Activated T-helper 1 cell treated with anti-CD3 and anti-CD28 coated beads, Interleukin-12 subunit alpha, Interleukin-12 subunit beta, Interleukin-2, Interleukin-4 antibody, amounts not matched to agents 30 ng/mL and 10 ng/mL and 1 ng/mL, durations not matched to agents 14 hours and 24 hours and 36 hours (primary cell): ENCODE measurements at regions of chr20 and their contacts with region 1.

Region 1: DNA sequence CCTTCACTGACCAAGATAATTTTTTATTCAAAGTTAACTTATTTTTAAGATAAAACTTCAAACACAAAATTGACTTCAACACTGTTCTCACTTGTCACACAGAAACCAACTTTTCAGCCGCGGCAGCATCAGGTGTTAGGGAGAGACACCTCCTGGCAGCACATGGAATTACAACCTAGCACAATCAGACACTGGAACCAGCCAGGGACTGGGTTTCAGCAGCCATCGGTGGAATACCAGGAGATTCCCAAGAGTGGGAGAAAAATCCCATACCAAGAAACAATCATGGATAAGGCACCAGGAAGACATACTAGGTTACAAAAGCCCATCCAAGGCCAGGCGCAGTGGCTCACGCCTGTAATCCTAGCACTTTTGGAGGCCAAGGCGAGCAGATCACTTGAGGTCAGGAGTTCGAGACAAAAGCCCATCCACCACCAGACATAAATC is 70.0 kb downstream of the SNX5 start:
- DNase-seq: peak; percentile 44
- H3K4me3 Mint-ChIP-seq: no peak overlapping the region
- H3K27ac Mint-ChIP-seq: no peak overlapping the region
- H3K4me1 Mint-ChIP-seq: peaks cover 37% of the 10 kb centered on the region
- H3K27me3 Mint-ChIP-seq: peaks cover 17% of the 10 kb centered on the region

Region 2: DNA sequence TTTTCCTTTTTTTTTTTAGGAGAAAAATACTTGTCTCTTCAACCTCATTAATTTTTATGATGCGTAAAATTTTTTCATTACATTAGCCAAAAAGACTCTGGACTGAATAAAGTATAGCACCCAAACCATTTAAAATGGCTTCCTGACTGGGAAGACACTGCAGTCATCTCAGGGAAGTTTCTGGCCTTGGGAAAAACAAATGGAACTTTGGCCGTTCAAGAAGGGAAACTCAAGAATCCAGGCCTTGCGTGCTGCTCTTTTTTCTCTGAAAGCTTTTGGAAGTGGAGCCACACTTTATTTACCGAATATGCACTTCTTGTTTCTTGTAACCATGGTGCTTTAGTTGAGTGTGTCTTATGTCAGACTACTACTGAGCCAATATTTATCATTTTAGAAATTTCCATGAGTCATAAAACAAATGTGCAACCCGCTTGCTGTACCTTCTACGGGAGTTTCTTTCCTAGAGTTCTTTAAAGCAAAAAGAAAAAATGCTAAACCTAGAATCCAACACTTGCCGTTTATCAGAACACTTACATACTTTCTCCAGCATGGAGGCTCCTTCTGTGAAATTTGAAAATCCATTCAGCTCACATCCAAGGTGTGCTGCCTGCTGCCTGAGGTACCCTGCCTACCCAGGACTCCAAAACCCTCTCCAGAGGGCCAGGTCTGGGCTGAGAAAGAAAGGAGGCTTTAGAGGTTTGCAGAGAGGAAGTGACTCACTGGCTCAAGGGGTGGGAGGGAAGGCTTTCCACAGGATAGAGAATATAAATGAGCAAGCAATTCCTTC is 340.2 kb before region 1 on chr20:
- intact Hi-C with region 1: loop called (anchors 5 kb)
- DNase-seq: no peak
- H3K4me3 Mint-ChIP-seq: peak overlapping the region; percentile 71
- H3K27ac Mint-ChIP-seq: peak overlapping the region; percentile 95
- H3K4me1 Mint-ChIP-seq: peaks cover 43% of the 10 kb centered on the region
- H3K27me3 Mint-ChIP-seq: no peaks in the 10 kb centered on the region

Region 3: GRCh38 chr20:17662333-17663039 is 236.1 kb before region 1 on chr20:
- intact Hi-C with region 1: loop called (anchors 5 kb)
- DNase-seq: no peak
- H3K4me3 Mint-ChIP-seq: no peak overlapping the region
- H3K27ac Mint-ChIP-seq: peak overlapping the region; percentile 72
- H3K4me1 Mint-ChIP-seq: peaks cover 70% of the 10 kb centered on the region
- H3K27me3 Mint-ChIP-seq: no peaks in the 10 kb centered on the region

Region 4: DNA sequence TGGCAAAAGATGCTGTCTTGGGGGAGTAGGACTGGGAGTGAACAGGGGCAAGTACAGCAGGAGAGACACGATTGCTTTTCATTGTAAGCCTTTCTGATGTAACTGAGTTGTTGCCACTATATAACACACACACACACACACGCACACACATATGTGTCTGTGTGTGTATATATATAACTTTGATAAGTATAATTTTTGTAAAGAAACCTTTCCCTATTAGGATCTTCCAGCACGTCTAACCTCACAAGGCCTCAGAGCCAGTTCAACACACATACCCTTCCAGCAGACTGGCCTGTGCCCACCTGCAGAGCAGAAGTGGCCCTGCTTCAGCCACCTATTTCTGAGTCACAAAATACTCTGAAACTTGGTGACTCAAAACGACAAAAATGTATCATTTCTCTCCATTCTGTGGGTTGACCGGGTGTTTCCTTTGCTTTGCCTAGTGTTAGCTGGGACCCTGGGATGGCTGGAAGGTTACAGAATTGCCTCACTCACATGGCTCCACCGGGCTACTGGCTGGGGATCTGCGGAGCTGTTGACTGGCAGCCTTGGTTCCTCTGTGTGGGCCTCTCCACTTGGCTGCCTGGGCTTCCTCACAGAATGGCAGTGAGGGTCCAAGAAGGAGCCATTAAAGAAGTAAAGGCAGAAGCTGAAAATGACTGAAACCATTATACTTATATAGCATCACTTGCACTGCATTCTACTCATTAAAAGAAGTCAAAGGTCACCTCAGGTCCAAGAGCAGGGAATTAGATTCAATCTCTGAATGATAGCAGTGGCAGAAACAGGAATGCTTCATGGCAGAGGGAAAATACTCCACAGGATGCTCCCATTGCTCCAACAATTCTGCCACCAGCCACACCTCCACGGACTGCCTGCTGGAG is 72.4 kb before region 1 on chr20:
- intact Hi-C with region 1: loop called (anchors 1 kb)
- DNase-seq: peak; percentile 5
- H3K4me3 Mint-ChIP-seq: no peak overlapping the region
- H3K27ac Mint-ChIP-seq: peak overlapping the region; percentile 71
- H3K4me1 Mint-ChIP-seq: peaks cover 15% of the 10 kb centered on the region
- H3K27me3 Mint-ChIP-seq: peaks cover 4% of the 10 kb centered on the region

Region 5: GRCh38 chr20:17958373-17959256 is 60.0 kb after region 1 on chr20:
- intact Hi-C with region 1: loop called (anchors 2 kb)
- DNase-seq: no peak
- H3K4me3 Mint-ChIP-seq: peak overlapping the region; percentile 13
- H3K27ac Mint-ChIP-seq: peak overlapping the region; percentile 1
- H3K4me1 Mint-ChIP-seq: peaks cover 82% of the 10 kb centered on the region
- H3K27me3 Mint-ChIP-seq: no peaks in the 10 kb centered on the region